Activated B cell treated with CpG ODN at 0.5 μM for 24 hours (primary cell): ENCODE measurements at regions of chr9 and their contacts with region 1.

Region 1: GRCh38 chr9:73183917-73184861 is 32.5 kb downstream of the ANXA1 start:
- DNase-seq: no peak
- ATAC-seq: no peak
- H3K4me3 Mint-ChIP-seq: no peak overlapping the region
- H3K27ac Mint-ChIP-seq: no peak overlapping the region
- H3K4me1 Mint-ChIP-seq: no peaks in the 10 kb centered on the region
- H3K27me3 Mint-ChIP-seq: peaks cover 3% of the 10 kb centered on the region
- CTCF ChIP-seq: no peak

Region 2: GRCh38 chr9:73104342-73104741 is 79.8 kb before region 1 on chr9:
- CTCF ChIA-PET with region 1: interaction called, 12 read pairs
- POLR2A ChIA-PET with region 1: no interaction called
- intact Hi-C with region 1: loop called (anchors 1 kb)
- DNase-seq: no peak
- ATAC-seq: no peak
- H3K4me3 Mint-ChIP-seq: no peak overlapping the region
- H3K27ac Mint-ChIP-seq: no peak overlapping the region
- H3K4me1 Mint-ChIP-seq: no peaks in the 10 kb centered on the region
- H3K27me3 Mint-ChIP-seq: no peaks in the 10 kb centered on the region
- CTCF ChIP-seq: no peak

Region 3: DNA sequence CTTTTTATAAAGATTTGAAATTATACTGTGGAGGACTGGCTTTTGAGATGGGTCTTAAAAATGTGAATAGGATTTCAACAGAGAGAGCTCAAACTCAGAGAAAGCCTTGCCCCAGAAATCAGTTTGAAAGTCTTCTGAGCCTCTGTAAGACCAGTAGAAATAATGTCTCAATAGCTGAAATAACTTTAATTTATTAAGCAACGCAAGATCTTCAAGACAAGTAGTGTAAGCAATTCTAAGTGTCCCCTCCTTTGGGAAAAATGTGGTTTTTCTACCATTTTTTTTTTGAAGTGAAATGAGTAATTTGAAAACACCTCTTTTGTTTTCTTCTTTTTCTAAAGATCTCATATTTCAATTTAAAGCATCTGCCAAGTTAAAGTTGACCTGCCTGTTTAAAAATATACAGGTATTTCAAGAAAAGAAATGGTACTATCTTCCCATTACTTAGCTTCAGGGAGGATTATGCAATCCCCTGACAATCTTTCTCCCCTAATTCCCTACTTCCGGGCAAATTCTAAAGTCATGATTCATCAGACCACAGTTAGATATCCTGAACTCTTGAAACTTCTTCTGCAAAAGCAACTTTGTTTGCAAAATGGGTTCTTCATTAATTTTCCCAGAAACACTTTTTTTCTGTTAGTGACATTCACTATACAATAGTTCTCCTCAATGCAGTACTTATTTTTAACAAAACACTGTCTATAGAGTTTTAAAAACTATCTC is 40.4 kb before region 1 on chr9:
- CTCF ChIA-PET with region 1: no interaction called
- POLR2A ChIA-PET with region 1: no interaction called
- intact Hi-C with region 1: no loop called
- DNase-seq: no peak
- ATAC-seq: no peak
- H3K4me3 Mint-ChIP-seq: no peak overlapping the region
- H3K27ac Mint-ChIP-seq: no peak overlapping the region
- H3K4me1 Mint-ChIP-seq: peaks cover 12% of the 10 kb centered on the region
- H3K27me3 Mint-ChIP-seq: no peaks in the 10 kb centered on the region
- CTCF ChIP-seq: no peak

Region 4: DNA sequence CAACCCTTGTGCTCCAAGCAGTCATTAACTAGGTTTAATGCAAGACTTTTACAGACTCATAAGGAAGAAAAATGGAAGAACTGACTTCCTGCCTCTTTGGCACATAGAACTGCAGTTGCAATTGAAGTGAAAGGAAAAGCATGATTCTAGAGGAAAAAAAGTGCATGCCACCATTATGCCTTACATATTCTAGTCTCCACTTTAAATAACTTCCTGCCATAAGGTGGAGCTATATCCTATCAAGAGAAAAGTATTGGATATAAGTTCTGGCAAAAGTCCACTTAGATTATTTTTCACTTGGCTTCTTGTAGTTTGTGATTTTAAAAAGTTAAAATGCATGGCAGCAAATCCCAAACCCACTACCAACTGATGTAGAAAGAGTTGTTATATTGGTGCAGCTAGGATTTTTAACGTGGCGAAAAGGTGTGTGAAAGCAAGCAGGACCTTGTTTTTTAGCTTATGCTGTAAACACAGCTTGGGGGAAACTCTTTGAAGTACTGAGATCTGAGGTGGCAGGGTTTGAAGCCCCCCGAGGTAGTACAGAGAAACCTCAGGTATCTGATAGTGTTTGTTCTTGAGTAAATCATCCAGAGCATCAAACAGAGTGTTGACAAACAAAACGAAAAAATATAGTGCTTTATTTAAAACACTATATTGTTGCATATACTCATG is 85.4 kb after region 1 on chr9:
- CTCF ChIA-PET with region 1: no interaction called
- POLR2A ChIA-PET with region 1: no interaction called
- intact Hi-C with region 1: no loop called
- DNase-seq: no peak
- ATAC-seq: no peak
- H3K4me3 Mint-ChIP-seq: no peak overlapping the region
- H3K27ac Mint-ChIP-seq: no peak overlapping the region
- H3K4me1 Mint-ChIP-seq: no peaks in the 10 kb centered on the region
- H3K27me3 Mint-ChIP-seq: no peaks in the 10 kb centered on the region
- CTCF ChIP-seq: no peak

Region 5: GRCh38 chr9:73515216-73515615 is 331.0 kb after region 1 on chr9:
- CTCF ChIA-PET with region 1: no interaction called
- POLR2A ChIA-PET with region 1: no interaction called
- intact Hi-C with region 1: no loop called
- DNase-seq: no peak
- ATAC-seq: no peak
- H3K4me3 Mint-ChIP-seq: no peak overlapping the region
- H3K27ac Mint-ChIP-seq: no peak overlapping the region
- H3K4me1 Mint-ChIP-seq: no peaks in the 10 kb centered on the region
- H3K27me3 Mint-ChIP-seq: no peaks in the 10 kb centered on the region
- CTCF ChIP-seq: no peak